ENCODE measurements at regions of chr7 and their contacts with region 1.

Region 1: DNA sequence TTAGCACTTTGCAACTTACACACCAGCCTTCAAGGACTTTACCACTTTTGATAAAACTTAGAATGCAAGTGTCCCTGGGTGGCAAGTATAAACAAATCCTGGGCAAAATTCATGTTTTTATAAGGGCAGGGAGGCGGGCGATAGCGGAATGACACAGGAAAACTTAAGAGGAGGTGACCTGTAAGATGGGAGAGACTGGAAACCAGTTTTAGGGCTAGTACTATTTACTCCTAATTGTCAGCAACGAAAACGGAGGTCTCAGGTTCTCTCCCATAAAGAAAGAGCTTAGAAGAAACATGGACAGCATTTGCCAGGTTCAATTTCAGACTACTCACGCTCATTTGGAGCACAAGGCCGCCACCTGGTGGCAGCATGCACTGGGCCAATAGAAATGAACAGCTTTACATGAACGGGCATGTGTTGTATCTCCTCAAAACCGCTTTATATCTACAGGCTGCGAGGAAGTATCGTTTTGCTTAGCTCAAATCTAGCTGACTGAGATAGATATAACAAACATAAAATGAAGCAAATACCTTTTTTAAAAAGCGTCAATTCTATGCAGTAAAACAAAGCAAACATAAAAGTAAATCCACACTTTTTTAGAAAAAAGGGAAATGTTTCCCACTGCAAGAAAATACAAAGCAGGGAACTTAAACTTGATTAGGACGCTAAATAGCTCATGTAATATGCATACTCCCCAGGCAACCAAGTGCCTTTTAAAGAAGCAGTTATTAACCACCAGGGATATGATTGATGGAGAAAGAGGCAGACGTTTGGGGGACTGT is 37.6 kb upstream of the SVOPL start:
- DNase-seq: peak; percentile 88
- H3K4me3 ChIP-seq: no peak overlapping the region
- H3K27ac ChIP-seq: no peak overlapping the region
- H3K4me1 ChIP-seq: no peaks in the 10 kb centered on the region
- H3K27me3 ChIP-seq: no peaks in the 10 kb centered on the region
- CTCF ChIP-seq: peak; percentile 79

Region 2: DNA sequence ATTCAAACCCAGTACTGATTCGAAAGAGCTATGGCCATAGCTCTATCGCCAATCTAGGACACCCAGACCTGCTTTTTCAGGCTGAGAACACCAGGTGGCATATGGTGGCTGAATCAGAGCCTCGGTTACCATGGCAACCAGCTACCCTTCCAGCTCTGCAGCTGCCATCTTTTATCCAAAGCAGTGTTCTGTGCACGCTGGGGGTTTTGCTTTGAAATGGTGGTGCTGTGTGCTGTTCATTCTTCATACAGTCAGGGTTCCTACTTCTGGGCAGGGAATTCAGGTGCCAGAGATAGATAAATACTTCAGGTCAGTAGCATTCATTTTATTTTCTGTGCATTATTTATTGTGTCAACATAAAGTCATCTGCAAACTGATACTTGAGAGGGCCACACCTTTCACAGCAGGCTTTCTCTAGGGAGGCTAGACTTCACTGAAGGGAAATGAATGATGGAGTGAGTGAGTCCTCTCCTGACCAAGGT is 577.1 kb before region 1 on chr7:
- intact Hi-C with region 1: loop called (anchors 2 kb)
- DNase-seq: peak; percentile 86
- H3K4me3 ChIP-seq: no peak overlapping the region
- H3K27ac ChIP-seq: no peak overlapping the region
- H3K4me1 ChIP-seq: no peaks in the 10 kb centered on the region
- H3K27me3 ChIP-seq: no peaks in the 10 kb centered on the region
- CTCF ChIP-seq: peak; percentile 67

Region 3: DNA sequence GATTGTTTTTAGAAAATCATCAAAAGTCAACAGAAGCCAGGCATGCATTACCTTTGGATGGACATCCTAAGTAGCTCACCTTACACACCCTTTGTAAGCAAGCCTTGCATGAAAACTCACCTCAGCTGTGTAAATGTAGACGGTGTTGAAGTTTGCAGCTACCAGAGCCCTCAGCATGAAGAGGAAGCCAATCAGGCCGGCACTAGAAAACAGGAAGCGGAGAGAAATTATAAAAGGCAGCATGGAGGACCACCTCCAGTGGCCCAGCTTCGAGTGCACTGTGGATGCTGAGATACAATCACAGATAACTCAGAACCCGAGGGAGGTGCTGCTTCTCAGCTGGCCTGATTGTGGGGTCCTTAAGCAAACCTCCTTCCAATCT is 112.9 kb before region 1 on chr7:
- intact Hi-C with region 1: no loop called
- DNase-seq: no peak
- H3K4me3 ChIP-seq: no peak overlapping the region
- H3K27ac ChIP-seq: no peak overlapping the region
- H3K4me1 ChIP-seq: no peaks in the 10 kb centered on the region
- H3K27me3 ChIP-seq: no peaks in the 10 kb centered on the region
- CTCF ChIP-seq: no peak

Region 4: DNA sequence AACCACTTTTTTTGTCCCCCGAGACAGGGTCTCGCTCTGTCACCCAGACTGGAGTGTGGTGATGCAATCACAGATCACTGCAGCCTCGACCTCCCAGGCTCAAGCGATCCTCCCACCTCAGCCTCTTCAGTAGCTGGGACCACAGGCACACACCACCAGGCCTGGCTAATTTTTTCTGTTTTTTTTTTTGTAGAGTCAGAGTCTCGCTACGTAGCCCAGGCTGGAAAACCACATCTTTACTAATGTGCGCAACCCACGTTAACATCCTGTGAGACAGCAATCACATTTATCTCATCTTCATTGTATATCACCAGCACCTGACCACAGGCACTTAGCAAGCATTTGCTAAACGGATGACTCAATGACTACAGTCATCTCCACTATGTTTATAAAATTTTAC is 137.1 kb after region 1 on chr7:
- intact Hi-C with region 1: no loop called
- DNase-seq: no peak
- H3K4me3 ChIP-seq: no peak overlapping the region
- H3K27ac ChIP-seq: no peak overlapping the region
- H3K4me1 ChIP-seq: no peaks in the 10 kb centered on the region
- H3K27me3 ChIP-seq: no peaks in the 10 kb centered on the region
- CTCF ChIP-seq: no peak

Region 5: GRCh38 chr7:139431010-139431409 is 692.3 kb after region 1 on chr7:
- intact Hi-C with region 1: no loop called
- DNase-seq: no peak
- H3K4me3 ChIP-seq: no peak overlapping the region
- H3K27ac ChIP-seq: no peak overlapping the region
- H3K4me1 ChIP-seq: no peaks in the 10 kb centered on the region
- H3K27me3 ChIP-seq: no peaks in the 10 kb centered on the region
- CTCF ChIP-seq: no peak

Measured in colonic mucosa (tissue), 4 donors.